ENCODE measurements at regions of chr2 and their contacts with region 1.

Region 1: GRCh38 chr2:157492189-157492773 is 48.4 kb upstream of the CYTIP start:
- DNase-seq: peak; percentile 53 to 84 (median 73)
- ATAC-seq: peak; percentile 94
- H3K4me3 ChIP-seq: no peak overlapping the region
- H3K4me3 Mint-ChIP-seq: no peak overlapping the region
- H3K27ac ChIP-seq: no peak overlapping the region
- H3K27ac Mint-ChIP-seq: no peak overlapping the region
- H3K4me1 ChIP-seq: peaks cover 4% of the 10 kb centered on the region
- H3K4me1 Mint-ChIP-seq: peaks cover 38% of the 10 kb centered on the region
- H3K27me3 ChIP-seq: no peaks in the 10 kb centered on the region
- H3K27me3 Mint-ChIP-seq: no peaks in the 10 kb centered on the region
- CTCF ChIP-seq: peak; percentile 86

Region 2: GRCh38 chr2:157336137-157337010 is 155.9 kb before region 1 on chr2:
- CTCF ChIA-PET with region 1: interaction called, 11 read pairs
- POLR2A ChIA-PET with region 1: no interaction called
- intact Hi-C with region 1: no loop called
- DNase-seq: peak in 8 of 9 experiments; percentile 4 to 73 (median 54)
- ATAC-seq: peak; percentile 35
- H3K4me3 ChIP-seq: peak overlapping the region in 1 of 2 experiments; percentile 9
- H3K4me3 Mint-ChIP-seq: peak overlapping the region; percentile 17
- H3K27ac ChIP-seq: no peak overlapping the region
- H3K27ac Mint-ChIP-seq: peak overlapping the region; percentile 20
- H3K4me1 ChIP-seq: peaks cover 32% of the 10 kb centered on the region
- H3K4me1 Mint-ChIP-seq: peaks cover 74% of the 10 kb centered on the region
- H3K27me3 ChIP-seq: no peaks in the 10 kb centered on the region
- H3K27me3 Mint-ChIP-seq: no peaks in the 10 kb centered on the region
- CTCF ChIP-seq: peak; percentile 71

Region 3: DNA sequence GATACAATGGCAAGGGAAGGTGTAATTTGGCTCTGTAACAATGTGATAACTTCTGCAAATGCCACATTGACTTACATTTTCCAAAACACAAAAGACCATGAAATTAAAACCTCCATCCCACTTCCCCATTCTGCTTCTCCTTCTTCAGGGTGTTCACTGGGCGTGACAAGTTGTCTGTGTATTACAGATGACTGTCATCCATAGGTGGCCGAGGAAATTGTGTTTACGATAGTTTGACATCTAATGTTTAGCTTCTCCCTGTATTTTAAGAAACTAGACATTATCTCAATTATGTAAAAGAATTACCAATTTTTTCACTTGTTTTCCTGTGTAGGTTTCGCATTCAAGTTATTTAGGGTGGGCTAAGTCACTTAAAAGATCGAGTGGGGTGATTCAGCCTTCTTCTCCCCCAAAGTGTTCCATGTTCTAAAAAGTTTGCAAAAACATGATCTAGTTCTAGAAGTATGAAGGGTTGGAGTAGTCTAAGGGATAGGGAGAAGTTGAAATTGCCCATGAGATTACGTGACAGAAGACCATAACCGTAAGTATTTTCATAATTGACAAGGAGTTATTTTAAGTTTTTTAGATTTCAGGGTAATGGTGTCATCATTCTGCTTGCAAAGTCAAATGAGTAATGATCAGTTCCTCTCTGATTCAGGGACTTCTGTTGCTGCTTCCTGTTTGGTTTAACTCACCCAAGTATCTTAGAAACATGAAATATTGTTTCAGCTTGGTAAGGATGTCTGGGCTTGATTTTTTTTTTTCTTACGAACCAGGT is 23.2 kb before region 1 on chr2:
- CTCF ChIA-PET with region 1: interaction called, 21 read pairs
- POLR2A ChIA-PET with region 1: no interaction called
- intact Hi-C with region 1: loop called (anchors 2 kb)
- DNase-seq: peak in 2 of 9 experiments; percentile 70 to 85
- ATAC-seq: peak; percentile 87
- H3K4me3 ChIP-seq: peak overlapping the region in 1 of 2 experiments; percentile 2
- H3K4me3 Mint-ChIP-seq: peak overlapping the region; percentile 57
- H3K27ac ChIP-seq: peak overlapping the region; percentile 67 to 73
- H3K27ac Mint-ChIP-seq: peak overlapping the region; percentile 96
- H3K4me1 ChIP-seq: peaks cover 43% of the 10 kb centered on the region
- H3K4me1 Mint-ChIP-seq: peaks cover 67% of the 10 kb centered on the region
- H3K27me3 ChIP-seq: no peaks in the 10 kb centered on the region
- H3K27me3 Mint-ChIP-seq: no peaks in the 10 kb centered on the region
- CTCF ChIP-seq: no peak

Region 4: DNA sequence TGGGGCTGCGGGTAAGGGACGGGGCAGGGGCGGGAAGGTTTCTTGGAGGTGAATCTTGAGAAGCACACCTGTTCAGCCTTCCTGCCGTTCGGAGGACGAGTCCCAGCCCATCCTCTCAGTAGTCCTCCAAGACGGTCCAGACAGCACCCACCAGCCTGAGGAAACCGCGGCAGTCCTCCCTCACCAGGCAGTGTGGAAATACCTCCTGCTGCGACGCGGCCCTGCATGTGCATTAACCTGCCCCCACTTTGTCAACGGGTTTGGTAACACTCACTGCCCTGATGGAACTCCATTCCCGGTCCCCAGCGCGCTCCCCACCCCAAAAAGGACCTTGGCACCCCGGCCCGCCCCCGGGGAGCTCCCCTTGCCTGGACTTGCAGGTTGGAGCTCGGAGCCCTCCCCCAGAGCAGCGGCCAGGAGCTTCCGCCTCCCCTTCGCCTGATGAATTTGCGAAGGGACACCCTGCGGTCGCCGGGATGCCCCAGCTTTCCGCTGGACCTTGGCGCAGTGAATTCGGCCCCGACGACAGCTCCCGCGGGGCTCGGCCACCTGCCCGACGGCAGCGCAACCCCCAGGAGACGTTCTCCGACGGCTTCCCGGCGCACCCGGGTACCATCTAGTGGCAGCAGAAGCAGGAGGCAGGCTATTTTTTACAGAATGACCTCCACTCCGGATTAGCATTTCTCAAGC is 104.9 kb after region 1 on chr2:
- CTCF ChIA-PET with region 1: interaction called, 19 read pairs
- POLR2A ChIA-PET with region 1: no interaction called
- intact Hi-C with region 1: loop called (anchors 1 to 2 kb)
- DNase-seq: peak; percentile 18 to 75 (median 57)
- ATAC-seq: peak; percentile 66
- H3K4me3 ChIP-seq: peak overlapping the region; percentile 34 to 36
- H3K4me3 Mint-ChIP-seq: peak overlapping the region; percentile 66
- H3K27ac ChIP-seq: no peak overlapping the region
- H3K27ac Mint-ChIP-seq: no peak overlapping the region
- H3K4me1 ChIP-seq: no peaks in the 10 kb centered on the region
- H3K4me1 Mint-ChIP-seq: peaks cover 10% of the 10 kb centered on the region
- H3K27me3 ChIP-seq: peaks cover 0 to 2% of the 10 kb centered on the region in 2 experiments
- H3K27me3 Mint-ChIP-seq: peaks cover 10% of the 10 kb centered on the region
- CTCF ChIP-seq: peak; percentile 72

Region 5: GRCh38 chr2:157751462-157752058 is 259.3 kb after region 1 on chr2:
- CTCF ChIA-PET with region 1: interaction called, 3 read pairs
- POLR2A ChIA-PET with region 1: no interaction called
- intact Hi-C with region 1: loop called in 1 of 2 experiments (anchors 5 kb)
- DNase-seq: peak in 4 of 9 experiments; percentile 17 to 31 (median 28)
- ATAC-seq: no peak
- H3K4me3 ChIP-seq: no peak overlapping the region
- H3K4me3 Mint-ChIP-seq: no peak overlapping the region
- H3K27ac ChIP-seq: no peak overlapping the region
- H3K27ac Mint-ChIP-seq: no peak overlapping the region
- H3K4me1 ChIP-seq: no peaks in the 10 kb centered on the region
- H3K4me1 Mint-ChIP-seq: peaks cover 2% of the 10 kb centered on the region
- H3K27me3 ChIP-seq: no peaks in the 10 kb centered on the region
- H3K27me3 Mint-ChIP-seq: no peaks in the 10 kb centered on the region
- CTCF ChIP-seq: no peak

Region 6: DNA sequence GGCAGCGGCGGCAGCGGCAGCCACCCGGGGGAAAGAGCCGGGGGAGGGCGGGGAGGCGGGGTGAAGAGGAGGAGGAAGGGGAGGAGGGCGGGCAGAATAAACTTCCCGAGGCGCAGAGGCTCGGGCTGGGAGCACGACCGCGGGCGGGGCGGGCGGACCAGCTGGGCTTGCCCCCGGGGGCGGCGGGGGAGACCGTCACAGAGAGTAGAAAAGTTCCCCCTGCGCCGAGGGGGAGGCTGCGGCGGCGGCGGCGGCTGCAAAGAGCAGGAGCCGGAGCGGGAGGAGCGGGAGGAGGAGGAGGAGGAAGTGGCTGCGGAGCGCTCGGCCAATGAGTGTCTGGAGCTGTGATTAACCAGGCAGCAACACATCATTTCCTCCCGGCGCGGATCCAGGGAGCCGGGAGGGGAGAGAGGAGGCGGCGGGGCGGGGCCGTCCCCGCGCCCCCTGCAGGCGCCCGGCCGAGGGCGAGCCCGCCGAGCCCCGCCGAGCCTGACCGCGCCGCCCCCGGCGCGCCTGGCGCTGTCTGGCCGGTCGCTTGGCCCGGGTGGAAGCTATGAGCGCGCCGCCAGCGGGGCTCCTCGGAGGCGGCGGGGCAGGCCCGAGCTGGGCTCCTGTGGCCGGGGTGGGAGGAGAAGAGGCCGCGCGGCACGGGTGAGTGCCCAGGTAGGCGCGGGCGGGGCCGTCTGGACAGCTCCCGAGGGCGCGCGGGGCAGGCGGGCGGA is 383.9 kb after region 1 on chr2 and contains the start of gene ACVR1:
- CTCF ChIA-PET with region 1: interaction called, 5 read pairs
- POLR2A ChIA-PET with region 1: no interaction called
- intact Hi-C with region 1: loop called (anchors 10 kb)
- DNase-seq: peak; percentile 37 to 92 (median 78)
- ATAC-seq: peak; percentile 72
- H3K4me3 ChIP-seq: peak within 1 kb of the TSS; percentile 53 to 74
- H3K4me3 Mint-ChIP-seq: peak within 1 kb of the TSS; percentile 94
- H3K27ac ChIP-seq: peak within 1 kb of the TSS; percentile 1 to 29
- H3K27ac Mint-ChIP-seq: peak within 1 kb of the TSS; percentile 90
- H3K4me1 ChIP-seq: peaks cover 10% of the 10 kb centered on the region
- H3K4me1 Mint-ChIP-seq: peaks cover 48% of the 10 kb centered on the region
- H3K27me3 ChIP-seq: no peaks in the 10 kb centered on the region
- H3K27me3 Mint-ChIP-seq: no peaks in the 10 kb centered on the region
- CTCF ChIP-seq: peak; percentile 27
- total RNA-seq, gene ACVR1: 7.0 to 8.3 TPM

Region 7: GRCh38 chr2:158753641-158754611 is 1261.6 kb after region 1 on chr2:
- CTCF ChIA-PET with region 1: interaction called, 3 read pairs
- POLR2A ChIA-PET with region 1: no interaction called
- intact Hi-C with region 1: loop called (anchors 5 kb)
- DNase-seq: peak in 4 of 9 experiments; percentile 21 to 58 (median 37)
- ATAC-seq: peak; percentile 52
- H3K4me3 ChIP-seq: no peak overlapping the region
- H3K4me3 Mint-ChIP-seq: no peak overlapping the region
- H3K27ac ChIP-seq: no peak overlapping the region
- H3K27ac Mint-ChIP-seq: no peak overlapping the region
- H3K4me1 ChIP-seq: no peaks in the 10 kb centered on the region
- H3K4me1 Mint-ChIP-seq: no peaks in the 10 kb centered on the region
- H3K27me3 ChIP-seq: no peaks in the 10 kb centered on the region
- H3K27me3 Mint-ChIP-seq: peaks cover 20% of the 10 kb centered on the region
- CTCF ChIP-seq: peak; percentile 91